Activated T-helper 1 cell treated with anti-CD3 and anti-CD28 coated beads, Interleukin-12 subunit alpha, Interleukin-12 subunit beta, Interleukin-2, Interleukin-4 antibody, amounts not matched to agents 30 ng/mL and 10 ng/mL and 1 ng/mL, durations not matched to agents 14 hours and 24 hours and 36 hours (primary cell): ENCODE measurements at regions of chr13 and their contacts with region 1.

Region 1: GRCh38 chr13:42110410-42111155 is 62.1 kb downstream of the DGKH start:
- DNase-seq: peak; percentile 17
- H3K4me3 Mint-ChIP-seq: no peak overlapping the region
- H3K27ac Mint-ChIP-seq: no peak overlapping the region
- H3K4me1 Mint-ChIP-seq: peaks cover 18% of the 10 kb centered on the region
- H3K27me3 Mint-ChIP-seq: no peaks in the 10 kb centered on the region

Region 2: GRCh38 chr13:41352935-41353840 is 757.4 kb before region 1 on chr13:
- intact Hi-C with region 1: loop called (anchors 1 kb)
- DNase-seq: peak; percentile 47
- H3K4me3 Mint-ChIP-seq: no peak overlapping the region
- H3K27ac Mint-ChIP-seq: peak overlapping the region; percentile 24
- H3K4me1 Mint-ChIP-seq: peaks cover 38% of the 10 kb centered on the region
- H3K27me3 Mint-ChIP-seq: no peaks in the 10 kb centered on the region

Region 3: GRCh38 chr13:41668130-41668757 is 442.3 kb before region 1 on chr13:
- intact Hi-C with region 1: loop called (anchors 1 kb)
- DNase-seq: peak; percentile 28
- H3K4me3 Mint-ChIP-seq: no peak overlapping the region
- H3K27ac Mint-ChIP-seq: no peak overlapping the region
- H3K4me1 Mint-ChIP-seq: no peaks in the 10 kb centered on the region
- H3K27me3 Mint-ChIP-seq: no peaks in the 10 kb centered on the region

Region 4: GRCh38 chr13:41905600-41906254 is 204.9 kb before region 1 on chr13:
- intact Hi-C with region 1: loop called (anchors 1 kb)
- DNase-seq: no peak
- H3K4me3 Mint-ChIP-seq: no peak overlapping the region
- H3K27ac Mint-ChIP-seq: no peak overlapping the region
- H3K4me1 Mint-ChIP-seq: peaks cover 14% of the 10 kb centered on the region
- H3K27me3 Mint-ChIP-seq: no peaks in the 10 kb centered on the region

Region 5: GRCh38 chr13:42048682-42049453 is 61.7 kb before region 1 on chr13:
- intact Hi-C with region 1: loop called (anchors 5 kb)
- DNase-seq: peak; percentile 59
- H3K4me3 Mint-ChIP-seq: peak overlapping the region; percentile 88
- H3K27ac Mint-ChIP-seq: peak overlapping the region; percentile 80
- H3K4me1 Mint-ChIP-seq: peaks cover 25% of the 10 kb centered on the region
- H3K27me3 Mint-ChIP-seq: peaks cover 16% of the 10 kb centered on the region

Region 6: DNA sequence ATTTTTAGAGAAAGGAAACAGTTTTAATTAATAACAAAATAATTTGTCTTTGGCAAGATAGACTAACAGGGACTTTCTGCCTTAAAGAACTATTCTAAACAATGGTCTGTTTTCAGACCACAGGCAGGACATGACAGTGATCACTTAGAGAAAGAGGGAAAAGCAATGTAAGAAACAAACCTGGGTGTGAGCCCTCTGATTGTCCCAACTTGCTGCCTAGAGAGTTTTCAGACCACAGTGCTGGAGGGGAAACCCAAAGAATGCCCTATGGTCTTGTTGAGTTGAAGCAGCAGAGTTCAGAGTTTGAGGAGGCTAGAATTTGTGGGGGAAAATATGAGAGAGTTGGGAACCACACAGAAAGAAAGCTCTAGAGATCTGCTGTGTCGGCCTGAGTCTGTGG is 24.0 kb before region 1 on chr13:
- intact Hi-C with region 1: no loop called
- DNase-seq: no peak
- H3K4me3 Mint-ChIP-seq: no peak overlapping the region
- H3K27ac Mint-ChIP-seq: no peak overlapping the region
- H3K4me1 Mint-ChIP-seq: peaks cover 15% of the 10 kb centered on the region
- H3K27me3 Mint-ChIP-seq: no peaks in the 10 kb centered on the region

Region 7: DNA sequence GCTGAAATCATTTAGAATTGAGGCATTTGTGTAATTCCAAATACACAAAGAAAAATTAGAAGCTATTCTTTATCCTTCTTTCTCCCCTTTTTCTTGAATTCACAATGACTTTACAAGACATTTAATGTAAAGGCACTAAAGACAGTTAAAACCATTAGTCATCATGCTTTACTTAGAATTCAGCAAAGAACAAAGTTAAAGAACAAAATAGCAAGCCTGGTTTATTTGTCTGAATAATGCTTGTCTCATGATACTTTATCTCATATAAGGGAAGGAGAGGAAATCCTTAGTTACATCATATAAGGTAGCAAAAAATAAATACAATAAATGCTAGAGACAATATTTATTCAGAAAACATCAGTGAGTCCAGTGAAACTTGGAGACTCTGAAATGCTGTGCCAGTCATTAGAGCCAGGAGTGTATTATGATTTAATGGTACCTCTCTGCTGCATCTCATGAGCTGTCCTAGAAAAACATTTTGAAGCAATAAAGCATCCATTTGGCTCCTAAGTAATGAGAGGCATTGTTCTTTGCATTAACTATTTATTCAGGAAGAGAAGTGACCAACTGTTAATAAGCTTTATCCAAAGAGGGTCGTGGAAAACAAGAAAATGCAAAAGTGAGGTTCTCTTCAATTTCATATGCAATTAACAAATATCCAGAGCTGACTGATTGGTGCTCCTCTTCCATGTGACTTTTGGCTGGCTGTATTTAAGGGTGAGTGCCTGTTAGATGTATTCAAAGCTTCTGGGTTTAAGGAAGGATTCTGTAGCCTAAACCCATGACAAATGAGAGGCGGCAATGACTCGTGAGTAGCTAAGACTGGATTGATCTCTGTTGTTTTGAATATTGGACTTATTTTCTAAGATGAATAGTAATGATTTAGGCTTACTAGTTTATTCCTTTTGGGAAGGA is 42.9 kb after region 1 on chr13:
- intact Hi-C with region 1: no loop called
- DNase-seq: no peak
- H3K4me3 Mint-ChIP-seq: no peak overlapping the region
- H3K27ac Mint-ChIP-seq: no peak overlapping the region
- H3K4me1 Mint-ChIP-seq: peaks cover 11% of the 10 kb centered on the region
- H3K27me3 Mint-ChIP-seq: no peaks in the 10 kb centered on the region

Region 8: DNA sequence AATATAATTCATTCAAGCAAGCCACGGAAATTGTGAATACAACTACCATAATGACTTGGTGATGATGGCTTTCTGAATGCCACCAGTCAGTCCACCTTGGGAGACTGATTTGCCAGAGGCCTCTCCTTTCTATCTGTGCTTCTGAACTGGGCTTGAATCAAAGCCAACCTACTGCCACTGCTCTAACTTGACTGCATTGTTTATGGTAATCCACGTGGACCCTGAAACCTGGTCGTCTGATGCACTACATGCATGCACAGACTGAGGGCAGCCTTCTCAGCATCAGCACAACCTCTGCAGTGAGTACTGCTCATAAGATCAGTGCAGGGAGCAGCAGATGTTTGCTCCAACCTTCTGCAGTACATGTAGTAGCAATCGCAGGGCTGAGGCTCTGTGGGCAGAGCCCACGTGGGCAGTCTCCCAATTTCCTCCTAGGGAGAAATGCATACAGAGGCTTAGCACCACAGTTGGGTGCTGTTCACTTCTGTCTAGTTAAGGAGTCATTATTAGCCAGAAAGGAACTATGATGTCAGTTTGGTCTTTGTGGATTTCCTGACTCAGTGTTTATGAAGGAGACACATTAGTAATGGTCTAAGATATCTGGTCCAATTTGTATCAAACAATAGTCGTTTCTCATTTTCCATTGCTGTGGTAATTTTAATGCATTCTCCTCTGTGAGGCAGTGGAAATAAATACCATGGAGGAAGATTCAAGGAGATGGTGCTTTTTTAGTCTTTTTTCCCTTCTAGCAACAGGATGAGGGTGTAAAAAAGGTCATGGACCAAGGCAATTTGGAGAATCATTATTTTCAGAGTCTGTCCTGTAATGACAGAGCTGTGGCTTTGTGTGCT is 243.9 kb after region 1 on chr13:
- intact Hi-C with region 1: no loop called
- DNase-seq: no peak
- H3K4me3 Mint-ChIP-seq: peak overlapping the region; percentile 72
- H3K27ac Mint-ChIP-seq: peak overlapping the region; percentile 99
- H3K4me1 Mint-ChIP-seq: peaks cover 68% of the 10 kb centered on the region
- H3K27me3 Mint-ChIP-seq: peaks cover 1% of the 10 kb centered on the region